ENCODE measurements at regions of chr2 and their contacts with region 1.

Region 1: DNA sequence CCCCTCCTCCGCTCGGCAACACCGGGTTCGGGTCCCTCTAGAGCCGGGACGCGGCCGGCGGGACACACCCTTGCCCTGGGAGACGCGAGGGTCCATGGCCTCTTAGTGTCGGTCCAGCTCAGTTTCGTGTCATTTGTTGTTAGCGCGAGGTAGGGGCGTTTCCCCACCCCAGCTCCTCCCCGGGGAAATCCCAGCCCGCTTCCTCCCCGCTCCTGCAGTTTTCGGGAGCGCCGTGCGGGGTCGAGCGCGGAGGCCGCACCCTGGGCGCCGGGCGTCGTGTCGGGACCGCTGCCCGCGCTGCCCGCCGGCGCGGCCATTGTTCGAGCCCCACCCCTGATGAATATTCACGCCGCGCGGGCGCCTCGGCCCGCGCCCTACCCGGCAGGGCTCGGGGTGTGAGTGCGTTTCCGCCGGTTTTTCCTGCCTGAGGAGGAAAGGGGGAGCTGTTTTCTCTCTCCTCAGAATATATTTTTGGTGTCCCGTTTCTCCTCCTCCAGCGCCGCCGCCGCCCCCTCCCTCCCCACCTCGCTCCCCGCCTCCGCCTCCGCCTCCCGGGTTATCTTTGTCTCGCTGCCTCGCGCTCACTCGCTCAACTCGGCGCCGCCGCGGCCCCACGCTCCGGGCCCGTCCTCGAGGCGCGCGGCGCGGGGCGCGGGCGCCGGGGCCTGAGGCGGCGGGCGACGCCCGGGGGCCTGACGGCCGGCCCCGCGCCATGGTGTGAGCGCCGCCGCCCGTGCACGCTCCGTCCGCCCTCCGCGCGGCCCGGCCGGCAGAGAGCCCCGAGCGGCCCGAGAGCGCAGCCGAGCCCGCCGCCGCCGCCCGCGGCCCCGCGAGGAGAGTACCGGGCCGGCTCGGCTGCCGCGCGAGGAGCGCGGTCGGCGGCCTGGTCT is at the start of gene MAP4K4:
- DNase-seq: peak; percentile 78
- H3K4me3 ChIP-seq: peak within 1 kb of the TSS; percentile 59 to 80 (median 66)
- H3K27ac ChIP-seq: peak within 1 kb of the TSS; percentile 84 to 89 (median 86)
- H3K4me1 ChIP-seq: peaks cover 6 to 34% (median 14%) of the 10 kb centered on the region in 4 donors
- H3K27me3 ChIP-seq: no peaks in the 10 kb centered on the region
- CTCF ChIP-seq: peak in 1 of 5 experiments; percentile 26
- EP300 ChIP-seq: no peak
- POLR2A ChIP-seq: peak; percentile 8
- total RNA-seq, gene MAP4K4: 20.3 to 42.3 (median 29.6) TPM

Region 2: DNA sequence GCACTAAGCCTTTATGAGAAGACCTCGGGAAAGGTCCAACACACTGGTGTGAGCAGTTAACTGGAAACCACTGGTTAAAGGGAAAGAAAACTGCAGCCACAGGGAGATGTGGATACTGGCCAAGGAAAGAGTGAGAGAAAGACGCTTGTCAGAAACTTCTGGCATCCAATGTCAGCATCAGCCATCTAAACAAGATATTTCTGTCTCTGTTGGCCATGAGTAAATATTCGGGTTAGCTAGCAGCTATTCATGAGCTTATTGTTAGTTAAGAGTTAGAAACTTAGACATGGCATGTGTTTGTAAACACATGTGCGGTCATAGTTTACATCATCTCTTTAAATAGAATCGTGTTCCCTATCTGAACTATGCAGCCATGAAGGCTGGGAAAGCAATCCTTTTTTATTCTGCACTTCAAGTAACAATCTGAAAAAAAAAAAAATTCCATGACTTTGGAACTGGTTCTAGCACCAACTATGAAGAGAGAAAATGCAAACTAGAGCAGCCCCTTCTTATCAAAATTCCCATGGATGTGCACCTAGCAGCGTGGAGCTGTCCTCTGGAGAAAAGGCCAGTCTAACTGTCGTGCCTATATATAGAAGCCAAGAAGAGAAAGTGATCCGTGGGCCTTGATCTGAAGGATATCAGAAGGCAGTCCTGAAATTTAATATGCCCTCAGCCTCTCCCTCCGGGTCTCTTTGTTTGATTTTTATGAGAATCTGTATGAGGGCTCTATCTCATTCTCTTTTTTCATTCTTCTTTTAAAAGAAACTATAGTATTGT is 138.4 kb before region 1 on chr2:
- in situ Hi-C with region 1: no loop called
- intact Hi-C with region 1: no loop called
- DNase-seq: no peak
- H3K4me3 ChIP-seq: no peak overlapping the region
- H3K27ac ChIP-seq: peak overlapping the region; percentile 44 to 59 (median 55)
- H3K4me1 ChIP-seq: peaks cover 0 to 12% (median 6%) of the 10 kb centered on the region in 4 donors
- H3K27me3 ChIP-seq: peaks cover 3% of the 10 kb centered on the region
- CTCF ChIP-seq: no peak
- EP300 ChIP-seq: no peak
- POLR2A ChIP-seq: no peak

Region 3: GRCh38 chr2:101775092-101775491 is 77.7 kb after region 1 on chr2:
- in situ Hi-C with region 1: no loop called
- intact Hi-C with region 1: loop called (anchors 2 kb)
- DNase-seq: no peak
- H3K4me3 ChIP-seq: no peak overlapping the region
- H3K27ac ChIP-seq: no peak overlapping the region
- H3K4me1 ChIP-seq: peaks cover 7 to 47% (median 19%) of the 10 kb centered on the region in 4 donors
- H3K27me3 ChIP-seq: no peaks in the 10 kb centered on the region
- CTCF ChIP-seq: no peak
- EP300 ChIP-seq: no peak
- POLR2A ChIP-seq: no peak

Region 4: GRCh38 chr2:101823347-101823791 is 126.0 kb after region 1 on chr2:
- in situ Hi-C with region 1: loop called in 3 of 4 experiments (anchors 10 to 25 kb)
- intact Hi-C with region 1: no loop called
- DNase-seq: peak; percentile 71
- H3K4me3 ChIP-seq: no peak overlapping the region
- H3K27ac ChIP-seq: no peak overlapping the region
- H3K4me1 ChIP-seq: peaks cover 10 to 40% (median 17%) of the 10 kb centered on the region in 4 donors
- H3K27me3 ChIP-seq: no peaks in the 10 kb centered on the region
- CTCF ChIP-seq: peak; percentile 53 to 65 (median 61)
- EP300 ChIP-seq: no peak
- POLR2A ChIP-seq: no peak

Region 5: DNA sequence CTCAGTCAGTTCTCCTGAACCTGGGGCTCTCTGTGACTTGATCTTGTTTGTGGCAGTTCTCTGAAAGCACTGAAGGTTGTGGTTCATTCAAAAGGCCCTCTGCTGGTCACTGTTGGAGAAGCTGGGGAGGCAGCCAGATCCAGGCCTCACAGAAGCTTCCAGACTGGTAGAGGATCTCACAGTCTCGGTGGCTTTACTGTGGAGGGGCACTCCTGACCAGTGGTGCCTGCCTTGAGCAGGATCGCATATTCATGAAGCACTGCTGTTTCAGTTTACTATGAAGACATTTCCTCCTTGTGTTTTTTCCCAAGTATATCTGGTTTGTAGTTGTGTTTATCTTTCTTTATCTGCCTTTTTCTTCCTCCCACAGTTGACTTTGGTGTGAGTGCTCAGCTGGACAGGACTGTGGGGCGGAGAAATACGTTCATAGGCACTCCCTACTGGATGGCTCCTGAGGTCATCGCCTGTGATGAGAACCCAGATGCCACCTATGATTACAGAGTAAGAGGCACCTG is 134.0 kb after region 1 on chr2:
- in situ Hi-C with region 1: loop called in 2 of 4 experiments (anchors 10 kb)
- intact Hi-C with region 1: loop called (anchors 5 kb)
- DNase-seq: peak; percentile 72
- H3K4me3 ChIP-seq: no peak overlapping the region
- H3K27ac ChIP-seq: peak overlapping the region; percentile 5 to 55 (median 15)
- H3K4me1 ChIP-seq: peaks cover 0 to 31% (median 4%) of the 10 kb centered on the region in 4 donors
- H3K27me3 ChIP-seq: no peaks in the 10 kb centered on the region
- CTCF ChIP-seq: peak; percentile 66 to 76 (median 73)
- EP300 ChIP-seq: no peak
- POLR2A ChIP-seq: no peak

Measured in transverse colon (tissue), 4 donors.